CD4-positive, alpha-beta memory T cell (primary cell): ENCODE measurements at regions of chr14 and their contacts with region 1.

Region 1: GRCh38 chr14:39114073-39114838 is at the start of gene GEMIN2:
- DNase-seq: peak; percentile 92 to 95 (median 94)
- H3K4me3 ChIP-seq: peak within 1 kb of the TSS; percentile 66 to 81
- H3K4me3 Mint-ChIP-seq: peak within 1 kb of the TSS; percentile 92 to 99 (median 97)
- H3K27ac ChIP-seq: peak within 1 kb of the TSS; percentile 80
- H3K27ac Mint-ChIP-seq: peak within 1 kb of the TSS; percentile 93 to 99 (median 97)
- H3K4me1 ChIP-seq: peaks cover 13% of the 10 kb centered on the region
- H3K4me1 Mint-ChIP-seq: peaks cover 12 to 25% (median 17%) of the 10 kb centered on the region in 4 donors
- H3K27me3 ChIP-seq: no peaks in the 10 kb centered on the region
- H3K27me3 Mint-ChIP-seq: peaks cover 2 to 6% of the 10 kb centered on the region in 2 donors
- total RNA-seq, gene GEMIN2: 13.4 to 16.9 TPM

Region 2: GRCh38 chr14:38973028-38973700 is 141.1 kb before region 1 on chr14:
- CTCF ChIA-PET with region 1: no interaction called
- POLR2A ChIA-PET with region 1: no interaction called
- intact Hi-C with region 1: no loop called
- DNase-seq: no peak
- H3K4me3 ChIP-seq: no peak overlapping the region
- H3K4me3 Mint-ChIP-seq: no peak overlapping the region
- H3K27ac ChIP-seq: no peak overlapping the region
- H3K27ac Mint-ChIP-seq: no peak overlapping the region
- H3K4me1 ChIP-seq: no peaks in the 10 kb centered on the region
- H3K4me1 Mint-ChIP-seq: no peaks in the 10 kb centered on the region
- H3K27me3 ChIP-seq: no peaks in the 10 kb centered on the region
- H3K27me3 Mint-ChIP-seq: peaks cover 4 to 6% of the 10 kb centered on the region in 2 donors

Region 3: DNA sequence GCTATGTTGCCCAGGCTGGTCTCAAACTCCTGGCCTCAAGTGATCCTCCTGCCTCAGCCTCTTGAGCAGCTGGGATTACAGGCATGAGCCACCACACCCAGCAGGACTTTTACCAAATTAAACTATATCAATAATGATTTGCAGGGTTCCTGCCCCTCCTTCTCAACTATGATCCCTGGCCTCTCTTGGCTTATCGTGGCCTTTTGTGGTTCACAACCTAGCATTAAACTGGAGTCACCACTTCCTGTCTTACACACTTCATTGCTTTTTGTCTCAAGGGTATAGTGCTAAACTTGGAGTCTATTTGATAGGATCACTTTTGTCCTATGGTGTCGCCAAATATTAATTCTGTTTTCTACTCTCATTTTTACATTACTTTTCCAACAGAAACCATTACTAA is 75.7 kb before region 1 on chr14:
- CTCF ChIA-PET with region 1: no interaction called
- POLR2A ChIA-PET with region 1: no interaction called
- intact Hi-C with region 1: no loop called
- DNase-seq: no peak
- H3K4me3 ChIP-seq: no peak overlapping the region
- H3K4me3 Mint-ChIP-seq: peak overlapping the region in 1 of 8 donors; percentile 18
- H3K27ac ChIP-seq: no peak overlapping the region
- H3K27ac Mint-ChIP-seq: peak overlapping the region in 5 of 7 donors; percentile 6 to 77 (median 58)
- H3K4me1 ChIP-seq: no peaks in the 10 kb centered on the region
- H3K4me1 Mint-ChIP-seq: peaks cover 5 to 19% (median 7%) of the 10 kb centered on the region in 4 donors
- H3K27me3 ChIP-seq: no peaks in the 10 kb centered on the region
- H3K27me3 Mint-ChIP-seq: no peaks in the 10 kb centered on the region

Region 4: GRCh38 chr14:39102969-39103957 is 11.0 kb before region 1 on chr14 and contains the start of gene SEC23A:
- CTCF ChIA-PET with region 1: interaction called, 5 read pairs
- POLR2A ChIA-PET with region 1: interaction called, 66 read pairs
- intact Hi-C with region 1: loop called (anchors 1 kb)
- DNase-seq: peak; percentile 80 to 88 (median 82)
- H3K4me3 ChIP-seq: peak within 1 kb of the TSS; percentile 77 to 89
- H3K4me3 Mint-ChIP-seq: peak within 1 kb of the TSS; percentile 93 to 98 (median 96)
- H3K27ac ChIP-seq: peak within 1 kb of the TSS; percentile 86
- H3K27ac Mint-ChIP-seq: peak within 1 kb of the TSS; percentile 91 to 99 (median 98)
- H3K4me1 ChIP-seq: peaks cover 50% of the 10 kb centered on the region
- H3K4me1 Mint-ChIP-seq: peaks cover 21 to 64% (median 40%) of the 10 kb centered on the region in 4 donors
- H3K27me3 ChIP-seq: no peaks in the 10 kb centered on the region
- H3K27me3 Mint-ChIP-seq: no peaks in the 10 kb centered on the region
- total RNA-seq, gene SEC23A: 61.1 to 70.3 TPM

Region 5: GRCh38 chr14:39158222-39158858 is 44.1 kb after region 1 on chr14:
- CTCF ChIA-PET with region 1: no interaction called
- POLR2A ChIA-PET with region 1: no interaction called
- intact Hi-C with region 1: no loop called
- DNase-seq: no peak
- H3K4me3 ChIP-seq: no peak overlapping the region
- H3K4me3 Mint-ChIP-seq: no peak overlapping the region
- H3K27ac ChIP-seq: no peak overlapping the region
- H3K27ac Mint-ChIP-seq: no peak overlapping the region
- H3K4me1 ChIP-seq: peaks cover 15% of the 10 kb centered on the region
- H3K4me1 Mint-ChIP-seq: peaks cover 11 to 25% (median 16%) of the 10 kb centered on the region in 4 donors
- H3K27me3 ChIP-seq: no peaks in the 10 kb centered on the region
- H3K27me3 Mint-ChIP-seq: no peaks in the 10 kb centered on the region

Region 6: DNA sequence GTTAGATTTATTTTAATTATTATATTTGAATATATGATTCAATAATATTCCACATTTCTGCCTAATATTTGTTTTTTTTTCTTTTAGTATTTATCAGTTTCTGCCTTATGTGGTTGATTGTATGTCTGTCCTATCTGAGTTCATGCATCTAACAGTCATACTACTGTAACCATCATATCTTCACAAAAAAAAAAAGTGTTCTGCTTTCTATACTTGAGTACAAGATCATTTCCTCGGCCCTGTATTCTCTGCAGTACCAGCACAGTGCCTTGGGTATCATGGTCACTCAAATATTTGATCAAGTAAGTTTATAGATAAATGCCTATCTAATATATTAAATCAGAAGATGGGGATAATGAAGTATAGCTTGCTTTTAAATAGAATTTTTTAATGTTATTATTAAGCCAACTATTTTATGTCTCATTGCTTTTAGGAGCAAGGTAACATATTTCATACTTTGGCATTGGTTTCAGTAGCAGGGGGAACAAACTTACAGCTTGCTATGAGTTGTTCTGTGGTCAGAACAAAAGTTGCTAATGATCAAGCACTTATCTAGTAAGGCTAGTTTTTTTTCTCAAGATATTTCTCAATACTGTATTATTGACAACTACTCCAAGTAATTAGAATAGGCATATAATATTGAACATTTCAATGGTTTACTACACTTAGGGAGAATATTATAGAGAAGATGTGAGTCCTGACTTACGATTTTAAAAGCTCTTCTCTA is 608.5 kb after region 1 on chr14:
- CTCF ChIA-PET with region 1: no interaction called
- POLR2A ChIA-PET with region 1: no interaction called
- intact Hi-C with region 1: no loop called
- DNase-seq: no peak
- H3K4me3 ChIP-seq: no peak overlapping the region
- H3K4me3 Mint-ChIP-seq: no peak overlapping the region
- H3K27ac ChIP-seq: no peak overlapping the region
- H3K27ac Mint-ChIP-seq: no peak overlapping the region
- H3K4me1 ChIP-seq: no peaks in the 10 kb centered on the region
- H3K4me1 Mint-ChIP-seq: no peaks in the 10 kb centered on the region
- H3K27me3 ChIP-seq: no peaks in the 10 kb centered on the region
- H3K27me3 Mint-ChIP-seq: no peaks in the 10 kb centered on the region